ENCODE measurements at regions of chr17 and their contacts with region 1.

Region 1: GRCh38 chr17:48954300-48954755 is 9.7 kb upstream of the SNF8 start:
- DNase-seq: peak; percentile 79
- ATAC-seq: peak; percentile 96
- H3K4me3 ChIP-seq: peak overlapping the region in 2 of 3 experiments; percentile 1 to 61; a peak in 3 of 6 replicates
- H3K27ac ChIP-seq: no peak overlapping the region
- H3K4me1 ChIP-seq: peaks cover 38% of the 10 kb centered on the region
- H3K27me3 ChIP-seq: no peaks in the 10 kb centered on the region
- CTCF ChIP-seq: peak; percentile 96
- EP300 ChIP-seq: no peak
- POLR2A ChIP-seq: no peak
- RAD21 ChIP-seq: peak; percentile 99

Region 2: DNA sequence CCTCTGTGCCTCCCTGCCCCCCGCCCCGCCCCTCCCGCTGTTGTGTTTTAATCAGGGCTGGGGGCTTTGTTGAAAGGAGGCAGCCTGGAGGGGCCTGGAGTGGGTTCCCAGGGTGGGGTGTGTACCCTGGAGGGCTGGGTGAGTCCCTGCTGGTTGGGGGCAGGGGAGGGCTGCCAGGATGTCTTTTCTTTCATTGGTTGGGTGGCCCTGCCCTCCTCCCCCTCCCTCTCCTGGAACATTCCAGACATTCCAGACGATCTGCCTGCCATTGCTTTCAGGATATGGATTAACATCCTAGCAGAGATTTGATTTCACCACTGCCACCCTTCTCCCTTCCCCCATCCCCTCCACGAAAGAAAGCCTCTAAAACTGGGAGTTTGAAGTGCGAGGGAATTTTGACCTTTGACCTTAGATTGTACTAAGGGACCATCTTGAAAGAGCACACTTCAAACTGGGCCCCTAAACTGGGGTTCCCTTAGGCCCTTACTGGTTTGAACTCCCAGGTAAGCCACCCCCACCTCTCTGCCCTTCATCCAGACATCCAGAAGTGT is 68.1 kb after region 1 on chr17:
- CTCF ChIA-PET with region 1: no interaction called
- POLR2A ChIA-PET with region 1: no interaction called
- in situ Hi-C with region 1: loop called (anchors 5 kb)
- intact Hi-C with region 1: no loop called
- DNase-seq: peak; percentile 76
- ATAC-seq: peak; percentile 59
- H3K4me3 ChIP-seq: no peak overlapping the region
- H3K27ac ChIP-seq: peak overlapping the region; percentile 59
- H3K4me1 ChIP-seq: peaks cover 58% of the 10 kb centered on the region
- H3K27me3 ChIP-seq: no peaks in the 10 kb centered on the region
- CTCF ChIP-seq: no peak
- EP300 ChIP-seq: peak in 1 of 2 experiments; percentile 25; a peak in 1 of 4 replicates
- POLR2A ChIP-seq: no peak
- RAD21 ChIP-seq: no peak